Endothelial cell of umbilical vein (primary cell): ENCODE measurements at regions of chr6 and their contacts with region 1.

Region 1: DNA sequence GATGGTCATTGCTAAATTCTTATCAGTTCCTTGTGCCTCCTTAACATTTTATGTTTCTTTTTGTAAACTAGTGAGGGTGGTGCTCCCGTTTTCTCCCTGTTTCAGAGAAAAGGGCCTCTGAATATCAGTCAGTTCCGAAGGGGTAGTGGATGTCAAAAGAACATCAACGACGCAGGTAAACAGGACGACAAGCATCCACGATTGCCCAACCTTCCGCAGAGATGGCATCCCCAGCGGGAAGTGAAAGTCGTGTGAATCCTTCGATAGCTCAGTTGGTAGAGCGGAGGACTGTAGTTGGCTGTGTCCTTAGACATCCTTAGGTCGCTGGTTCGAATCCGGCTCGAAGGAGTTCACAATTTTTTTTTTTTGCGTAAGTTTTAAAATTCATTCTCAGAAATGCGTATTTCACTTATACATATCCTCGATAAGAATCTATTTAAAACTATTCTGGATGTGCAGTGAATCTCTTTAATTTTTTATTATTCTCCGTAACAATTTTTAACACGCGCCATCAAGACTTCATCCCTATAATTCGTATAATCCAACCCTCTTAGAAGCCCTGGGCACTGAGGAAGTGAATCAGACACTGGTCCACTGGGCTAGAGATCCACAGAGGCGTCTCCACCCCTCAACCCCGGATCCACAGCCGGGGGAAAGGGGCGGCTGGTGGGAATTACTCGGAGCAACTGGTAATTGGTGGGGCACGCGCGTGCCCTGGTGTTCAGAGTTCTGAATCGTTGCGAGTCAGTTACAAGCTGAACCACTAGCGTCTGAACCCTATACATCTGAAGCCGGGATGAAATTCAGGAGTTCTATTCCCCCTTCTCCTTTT is 27.9 kb upstream of the ABT1 start:
- DNase-seq: peak; percentile 97
- H3K4me3 ChIP-seq: peak overlapping the region; percentile 50 to 95 (median 90)
- H3K27ac ChIP-seq: no peak overlapping the region
- H3K4me1 ChIP-seq: peaks cover 6% of the 10 kb centered on the region
- H3K27me3 ChIP-seq: no peaks in the 10 kb centered on the region
- CTCF ChIP-seq: peak in 1 of 2 donors; percentile 46
- POLR2A ChIP-seq: no peak

Region 2: GRCh38 chr6:26175428-26176181 is 393.2 kb before region 1 on chr6:
- CTCF ChIA-PET with region 1: interaction called, 4 read pairs
- POLR2A ChIA-PET with region 1: no interaction called
- dilution Hi-C with region 1: no loop called
- intact Hi-C with region 1: loop called (anchors 5 kb)
- DNase-seq: peak; percentile 85
- H3K4me3 ChIP-seq: no peak overlapping the region
- H3K27ac ChIP-seq: no peak overlapping the region
- H3K4me1 ChIP-seq: peaks cover 11% of the 10 kb centered on the region
- H3K27me3 ChIP-seq: no peaks in the 10 kb centered on the region
- CTCF ChIP-seq: peak; percentile 46 to 51
- POLR2A ChIP-seq: no peak

Region 3: DNA sequence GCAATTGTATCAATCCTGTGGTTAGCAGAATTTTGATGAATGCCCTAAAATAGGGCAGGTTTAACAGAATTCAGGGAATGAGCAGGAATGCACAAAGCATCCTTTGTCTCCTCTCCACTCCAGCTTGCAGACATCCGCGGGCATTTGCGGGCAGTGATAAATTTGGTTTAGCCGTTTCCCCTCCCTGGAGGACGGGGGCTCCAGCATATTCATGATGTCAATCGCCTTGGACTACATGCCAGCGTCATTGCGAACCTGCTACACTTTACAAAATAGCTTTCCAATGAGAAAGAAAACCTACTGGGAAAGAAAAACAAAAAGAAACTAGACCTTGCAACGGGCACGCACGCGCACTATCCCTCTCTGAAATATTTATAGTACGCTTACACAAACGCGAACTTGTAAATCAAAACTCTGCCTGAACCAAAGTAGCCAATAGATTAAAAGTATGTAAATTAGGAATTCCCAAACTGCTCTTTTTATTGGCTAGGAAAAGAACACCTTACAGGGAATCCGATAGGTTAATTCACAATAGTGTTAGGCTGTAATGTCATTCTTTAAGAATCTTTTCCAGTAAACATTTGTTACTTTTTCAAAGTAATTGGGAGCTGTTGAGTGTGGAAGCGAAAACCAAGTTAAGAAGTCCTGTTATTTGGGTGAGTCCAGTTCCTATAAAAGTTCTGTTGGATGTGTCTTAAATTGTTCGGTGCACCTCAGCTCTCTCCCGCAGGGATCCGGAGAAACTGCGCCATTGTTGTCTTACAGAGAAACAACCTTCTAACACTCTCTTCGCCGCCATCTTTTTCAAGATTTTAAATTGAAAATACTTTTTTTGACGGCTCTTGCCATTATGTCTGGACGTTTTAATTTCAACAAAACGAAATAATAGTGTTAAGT is 344.9 kb before region 1 on chr6:
- CTCF ChIA-PET with region 1: no interaction called
- POLR2A ChIA-PET with region 1: no interaction called
- dilution Hi-C with region 1: no loop called
- intact Hi-C with region 1: no loop called
- DNase-seq: peak; percentile 94
- H3K4me3 ChIP-seq: peak overlapping the region; percentile 47 to 94 (median 77)
- H3K27ac ChIP-seq: peak overlapping the region; percentile 96
- H3K4me1 ChIP-seq: peaks cover 14% of the 10 kb centered on the region
- H3K27me3 ChIP-seq: no peaks in the 10 kb centered on the region
- CTCF ChIP-seq: no peak
- POLR2A ChIP-seq: peak; percentile 71

Region 4: DNA sequence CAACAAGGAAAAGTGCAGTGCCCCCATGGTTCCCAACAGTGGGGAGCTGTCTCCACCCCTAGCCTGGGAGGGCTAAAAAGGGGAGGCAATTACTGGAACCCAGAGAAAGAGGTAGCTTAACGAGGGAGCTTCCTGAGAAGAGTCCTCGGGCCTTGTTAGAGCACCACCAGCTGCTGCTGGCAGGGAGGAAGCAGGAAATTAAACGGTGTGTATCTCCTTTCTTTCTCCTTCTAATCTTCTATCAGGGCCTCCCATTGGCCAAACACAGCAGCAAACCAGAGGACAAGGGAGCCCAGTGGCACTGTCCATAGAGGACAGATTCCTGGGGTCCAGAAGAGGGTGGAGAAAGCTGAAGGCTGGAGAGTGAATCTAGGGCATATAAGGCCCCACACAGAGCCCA is 193.5 kb before region 1 on chr6:
- CTCF ChIA-PET with region 1: no interaction called
- POLR2A ChIA-PET with region 1: no interaction called
- dilution Hi-C with region 1: no loop called
- intact Hi-C with region 1: no loop called
- DNase-seq: no peak
- H3K4me3 ChIP-seq: no peak overlapping the region
- H3K27ac ChIP-seq: no peak overlapping the region
- H3K4me1 ChIP-seq: no peaks in the 10 kb centered on the region
- H3K27me3 ChIP-seq: no peaks in the 10 kb centered on the region
- CTCF ChIP-seq: no peak
- POLR2A ChIP-seq: no peak

Region 5: GRCh38 chr6:26520853-26521599 is 47.8 kb before region 1 on chr6:
- CTCF ChIA-PET with region 1: interaction called, 3 read pairs
- POLR2A ChIA-PET with region 1: no interaction called
- dilution Hi-C with region 1: no loop called
- intact Hi-C with region 1: loop called (anchors 1 kb)
- DNase-seq: peak; percentile 88
- H3K4me3 ChIP-seq: peak overlapping the region; percentile 46 to 82 (median 79)
- H3K27ac ChIP-seq: peak overlapping the region; percentile 76
- H3K4me1 ChIP-seq: peaks cover 10% of the 10 kb centered on the region
- H3K27me3 ChIP-seq: no peaks in the 10 kb centered on the region
- CTCF ChIP-seq: no peak
- POLR2A ChIP-seq: peak; percentile 68

Region 6: DNA sequence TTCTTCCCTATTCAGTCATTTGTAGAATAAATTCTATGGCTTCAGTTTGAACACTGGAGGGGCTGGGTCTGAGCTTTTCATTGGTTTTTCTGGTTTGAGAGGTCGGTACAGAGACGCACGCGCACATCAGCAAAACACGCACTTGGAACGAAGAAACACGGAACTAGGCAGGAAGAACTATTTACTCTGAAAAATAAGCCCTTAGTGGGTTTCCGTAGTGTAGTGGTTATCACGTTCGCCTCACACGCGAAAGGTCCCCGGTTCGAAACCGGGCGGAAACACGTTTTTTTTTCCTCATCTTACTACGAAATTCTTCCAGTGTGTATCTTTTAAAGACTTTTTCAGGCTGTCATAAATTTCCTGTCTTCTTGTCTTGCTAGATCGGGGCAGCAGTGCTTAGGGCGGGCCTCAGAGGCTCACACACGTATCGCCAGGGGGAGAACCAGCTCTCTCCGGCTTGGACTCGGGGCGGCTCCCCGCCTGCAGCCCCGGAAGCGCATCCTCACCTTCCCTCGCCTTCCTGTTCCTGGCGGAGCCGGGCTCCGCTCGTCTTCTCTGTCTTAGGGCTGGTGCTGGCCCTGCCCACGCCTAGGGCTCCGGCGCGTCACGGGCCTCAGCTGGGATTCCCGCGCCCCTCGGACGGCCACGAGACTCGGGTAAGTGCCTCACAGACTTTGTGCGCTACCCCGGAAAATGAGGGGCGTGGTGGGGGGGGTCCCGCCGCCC is 30.8 kb before region 1 on chr6 and contains the start of gene HMGN4:
- CTCF ChIA-PET with region 1: interaction called, 10 read pairs
- POLR2A ChIA-PET with region 1: no interaction called
- dilution Hi-C with region 1: no loop called
- intact Hi-C with region 1: loop called (anchors 1 kb)
- DNase-seq: peak; percentile 93
- H3K4me3 ChIP-seq: peak within 1 kb of the TSS; percentile 87 to 99 (median 98)
- H3K27ac ChIP-seq: peak within 1 kb of the TSS; percentile 85
- H3K4me1 ChIP-seq: peaks cover 21% of the 10 kb centered on the region
- H3K27me3 ChIP-seq: no peaks in the 10 kb centered on the region
- CTCF ChIP-seq: no peak
- POLR2A ChIP-seq: no peak
- total RNA-seq, gene HMGN4: 33.7 and 36.9 TPM in 2 replicates

Region 7: GRCh38 chr6:26657256-26657655 is 88.4 kb after region 1 on chr6:
- CTCF ChIA-PET with region 1: no interaction called
- POLR2A ChIA-PET with region 1: no interaction called
- dilution Hi-C with region 1: no loop called
- intact Hi-C with region 1: no loop called
- DNase-seq: no peak
- H3K4me3 ChIP-seq: no peak overlapping the region
- H3K27ac ChIP-seq: no peak overlapping the region
- H3K4me1 ChIP-seq: peaks cover 9% of the 10 kb centered on the region
- H3K27me3 ChIP-seq: peaks cover 4 to 8% of the 10 kb centered on the region in 2 experiments
- CTCF ChIP-seq: no peak
- POLR2A ChIP-seq: no peak

Region 8: GRCh38 chr6:27078734-27079357 is 510.0 kb after region 1 on chr6:
- CTCF ChIA-PET with region 1: interaction called, 6 read pairs
- POLR2A ChIA-PET with region 1: no interaction called
- dilution Hi-C with region 1: no loop called
- intact Hi-C with region 1: loop called (anchors 1 kb)
- DNase-seq: peak; percentile 71
- H3K4me3 ChIP-seq: no peak overlapping the region
- H3K27ac ChIP-seq: no peak overlapping the region
- H3K4me1 ChIP-seq: peaks cover 2% of the 10 kb centered on the region
- H3K27me3 ChIP-seq: peaks cover 6 to 16% of the 10 kb centered on the region in 2 experiments
- CTCF ChIP-seq: peak; percentile 48 to 49
- POLR2A ChIP-seq: no peak

Region 9: GRCh38 chr6:27472617-27473400 is 904.0 kb after region 1 on chr6 and contains the start of gene ZNF184:
- CTCF ChIA-PET with region 1: no interaction called
- POLR2A ChIA-PET with region 1: no interaction called
- dilution Hi-C with region 1: no loop called
- intact Hi-C with region 1: loop called (anchors 10 kb)
- DNase-seq: peak; percentile 98
- H3K4me3 ChIP-seq: peak within 1 kb of the TSS; percentile 68 to 94 (median 82)
- H3K27ac ChIP-seq: peak within 1 kb of the TSS; percentile 74
- H3K4me1 ChIP-seq: peaks cover 9% of the 10 kb centered on the region
- H3K27me3 ChIP-seq: peaks cover 9 to 14% of the 10 kb centered on the region in 2 experiments
- CTCF ChIP-seq: no peak
- POLR2A ChIP-seq: peak; percentile 84
- total RNA-seq, gene ZNF184: 5.4 and 6.5 TPM in 2 replicates